ENCODE measurements at regions of chr1 and their contacts with region 1.

Region 1: DNA sequence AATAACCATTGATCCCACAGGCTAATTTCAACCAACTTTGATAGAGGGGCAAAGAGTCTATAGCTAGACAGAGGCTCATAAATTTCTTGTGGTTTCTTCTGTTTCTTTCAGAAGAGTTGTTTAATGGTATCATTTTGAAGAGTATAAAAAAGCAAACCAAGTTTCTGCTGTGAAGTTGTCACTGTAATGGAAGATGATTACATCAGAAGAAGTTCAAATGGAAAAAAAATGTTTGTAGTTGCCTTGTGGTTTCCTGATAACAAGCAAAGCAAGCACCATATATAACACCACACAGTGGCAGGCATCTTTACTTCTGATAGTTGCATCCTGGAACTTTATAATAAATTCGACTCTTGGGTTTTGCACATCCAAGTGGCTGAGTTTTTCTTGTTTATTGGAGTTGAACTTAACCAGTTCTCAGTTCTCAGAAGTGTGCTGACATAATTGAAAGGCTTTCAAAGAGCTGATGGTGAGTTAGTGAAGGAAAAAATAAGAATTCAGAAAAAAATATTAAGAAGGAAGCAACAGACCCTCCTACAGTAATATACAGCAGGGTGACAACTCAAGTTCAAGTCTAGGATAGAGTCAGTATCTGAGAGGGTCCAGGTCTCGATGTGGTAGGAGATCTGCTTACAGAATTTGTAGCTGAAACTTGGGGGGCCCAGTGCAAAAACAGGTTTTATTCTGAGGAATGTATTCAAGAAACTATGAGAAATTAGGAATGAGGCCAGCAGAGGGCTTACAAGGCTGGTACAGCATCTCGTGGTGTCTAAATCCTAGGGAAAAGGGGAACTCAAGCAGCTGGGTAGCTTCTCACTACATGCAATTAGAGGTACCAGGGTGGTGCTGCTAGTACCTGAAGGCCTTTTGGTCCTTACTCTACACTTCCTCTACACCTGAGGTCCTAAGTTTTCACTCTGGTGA is 123.5 kb downstream of the CRB1 start:
- DNase-seq: no peak
- ATAC-seq: peak; percentile 70
- H3K4me3 Mint-ChIP-seq: no peak overlapping the region
- H3K27ac Mint-ChIP-seq: no peak overlapping the region
- H3K4me1 Mint-ChIP-seq: peaks cover 10% of the 10 kb centered on the region
- H3K27me3 Mint-ChIP-seq: peaks cover 2% of the 10 kb centered on the region

Region 2: GRCh38 chr1:197374428-197374827 is 17.1 kb before region 1 on chr1:
- CTCF ChIA-PET with region 1: interaction called, 12 read pairs
- DNase-seq: no peak
- ATAC-seq: peak; percentile 55
- H3K4me3 Mint-ChIP-seq: peak overlapping the region; percentile 45
- H3K27ac Mint-ChIP-seq: peak overlapping the region; percentile 35
- H3K4me1 Mint-ChIP-seq: peaks cover 8% of the 10 kb centered on the region
- H3K27me3 Mint-ChIP-seq: no peaks in the 10 kb centered on the region

Measured in activated CD8-positive, alpha-beta memory T cell treated with anti-CD3 and anti-CD28 coated beads, Interleukin-2, amount 10 ng/mL, durations not matched to agents 7 days and 5 days (primary cell).